ENCODE measurements at regions of chr2 and their contacts with region 1.

Region 1: DNA sequence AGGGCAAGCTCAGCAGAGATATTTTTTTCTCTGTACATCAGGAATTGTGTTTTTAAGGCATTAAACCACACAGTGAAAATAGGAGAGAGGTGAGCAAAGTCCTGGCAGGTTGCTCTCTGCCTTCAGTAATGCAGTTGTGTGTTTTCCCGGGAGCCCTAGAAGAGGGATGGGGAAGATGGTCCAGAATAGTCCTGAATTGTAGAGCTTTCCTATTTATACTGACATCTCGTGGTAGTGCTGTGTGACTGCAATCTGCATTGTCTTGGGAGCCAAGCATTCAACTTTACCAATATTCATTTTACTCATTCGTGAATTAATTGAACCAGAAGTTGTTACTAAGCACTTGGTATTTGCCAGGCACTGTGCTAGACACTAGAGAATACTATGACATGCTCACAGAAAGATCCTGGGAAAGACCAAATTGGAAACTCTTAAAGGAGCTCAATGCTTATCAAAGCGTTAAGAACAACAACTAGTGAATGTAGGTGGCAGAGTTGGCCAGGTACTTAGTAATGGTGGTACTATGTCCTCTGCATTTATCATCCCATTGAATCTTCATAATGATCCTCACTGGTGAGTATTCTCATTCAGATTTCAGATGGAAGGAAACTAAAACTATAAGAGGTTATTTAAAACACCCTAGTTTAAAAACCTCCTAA is 214.6 kb downstream of the TRIB2 start:
- DNase-seq: no peak
- H3K4me3 ChIP-seq: no peak overlapping the region
- H3K27ac ChIP-seq: no peak overlapping the region
- H3K4me1 ChIP-seq: no peaks in the 10 kb centered on the region
- H3K27me3 ChIP-seq: no peaks in the 10 kb centered on the region
- CTCF ChIP-seq: peak; percentile 57 to 86 (median 78)
- POLR2A ChIP-seq: no peak

Region 2: GRCh38 chr2:11863513-11864328 is 1067.6 kb before region 1 on chr2:
- intact Hi-C with region 1: loop called (anchors 5 kb)
- DNase-seq: peak; percentile 80 to 81
- H3K4me3 ChIP-seq: peak overlapping the region in 1 of 3 donors; percentile 10
- H3K27ac ChIP-seq: peak overlapping the region; percentile 46 to 52
- H3K4me1 ChIP-seq: no peaks in the 10 kb centered on the region
- H3K27me3 ChIP-seq: no peaks in the 10 kb centered on the region
- CTCF ChIP-seq: peak; percentile 82 to 95 (median 95)
- POLR2A ChIP-seq: no peak

Region 3: GRCh38 chr2:12728221-12728777 is 203.0 kb before region 1 on chr2:
- intact Hi-C with region 1: no loop called
- DNase-seq: no peak
- H3K4me3 ChIP-seq: no peak overlapping the region
- H3K27ac ChIP-seq: peak overlapping the region in 1 of 2 donors; percentile 39
- H3K4me1 ChIP-seq: no peaks in the 10 kb centered on the region
- H3K27me3 ChIP-seq: no peaks in the 10 kb centered on the region
- CTCF ChIP-seq: no peak
- POLR2A ChIP-seq: no peak

Measured in breast epithelium (tissue), 4 donors.